ENCODE measurements at regions of chr9 and their contacts with region 1.

Region 1: GRCh38 chr9:4662989-4663792 is 1.1 kb downstream of the PLPP6 start:
- DNase-seq: peak in 4 of 35 experiments; percentile 8 to 56 (median 31)
- ATAC-seq: peak in 1 of 4 experiments; percentile 5
- H3K4me3 ChIP-seq: peak overlapping the region; percentile 69 to 84
- H3K4me3 Mint-ChIP-seq: peak overlapping the region; percentile 83 to 98 (median 96)
- H3K27ac ChIP-seq: peak overlapping the region; percentile 84
- H3K27ac Mint-ChIP-seq: peak overlapping the region; percentile 88 to 94
- H3K4me1 ChIP-seq: peaks cover 42 to 49% of the 10 kb centered on the region in 2 experiments
- H3K4me1 Mint-ChIP-seq: peaks cover 64 to 73% (median 69%) of the 10 kb centered on the region in 3 donors
- H3K27me3 ChIP-seq: no peaks in the 10 kb centered on the region
- H3K27me3 Mint-ChIP-seq: no peaks in the 10 kb centered on the region

Region 2: GRCh38 chr9:2837915-2838314 is 1825.3 kb before region 1 on chr9:
- CTCF ChIA-PET with region 1: interaction called in 1 of 2 experiments, 12 read pairs
- POLR2A ChIA-PET with region 1: no interaction called
- DNase-seq: no peak
- ATAC-seq: no peak
- H3K4me3 ChIP-seq: no peak overlapping the region
- H3K4me3 Mint-ChIP-seq: no peak overlapping the region
- H3K27ac ChIP-seq: no peak overlapping the region
- H3K27ac Mint-ChIP-seq: no peak overlapping the region
- H3K4me1 ChIP-seq: peaks cover 0 to 7% of the 10 kb centered on the region in 2 experiments
- H3K4me1 Mint-ChIP-seq: peaks cover 26 to 30% (median 28%) of the 10 kb centered on the region in 3 donors
- H3K27me3 ChIP-seq: no peaks in the 10 kb centered on the region
- H3K27me3 Mint-ChIP-seq: no peaks in the 10 kb centered on the region